ENCODE measurements at regions of chr3 and their contacts with region 1.

Region 1: DNA sequence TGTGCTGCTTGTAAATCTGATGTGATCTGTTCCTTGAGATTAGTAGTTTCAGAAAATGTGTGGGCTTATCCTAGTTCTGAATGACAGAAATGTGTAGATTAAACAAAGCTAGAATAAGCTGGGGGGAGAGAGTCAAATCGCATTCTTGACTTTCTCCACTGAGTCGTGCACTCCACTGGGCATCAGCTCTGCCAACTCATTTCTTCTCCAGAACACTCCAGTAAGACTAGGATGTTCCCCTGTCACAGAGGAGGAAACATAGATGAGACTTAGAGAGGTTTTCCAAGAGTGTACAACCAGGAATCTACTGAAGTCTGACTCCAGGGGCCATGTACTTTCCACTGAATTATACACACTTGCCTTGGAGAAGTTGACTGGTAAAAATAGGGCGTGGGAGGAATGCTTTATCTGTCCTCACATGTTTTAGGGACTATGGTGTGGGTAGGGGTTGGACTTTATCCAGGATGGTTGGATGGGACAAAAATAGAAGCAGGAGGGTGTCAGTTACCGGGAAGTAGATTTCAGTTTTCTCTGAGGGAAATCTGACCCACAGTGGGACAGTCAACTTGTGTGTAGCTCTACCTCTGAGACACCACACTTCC is 298.2 kb downstream of the UBE2E2 start:
- DNase-seq: no peak
- H3K4me3 ChIP-seq: no peak overlapping the region
- H3K27ac ChIP-seq: no peak overlapping the region
- H3K4me1 ChIP-seq: no peaks in the 10 kb centered on the region
- H3K27me3 ChIP-seq: no peaks in the 10 kb centered on the region
- CTCF ChIP-seq: no peak
- POLR2A ChIP-seq: no peak

Region 2: GRCh38 chr3:23519314-23520208 is 18.3 kb after region 1 on chr3:
- intact Hi-C with region 1: loop called (anchors 2 kb)
- DNase-seq: no peak
- H3K4me3 ChIP-seq: no peak overlapping the region
- H3K27ac ChIP-seq: no peak overlapping the region
- H3K4me1 ChIP-seq: no peaks in the 10 kb centered on the region
- H3K27me3 ChIP-seq: no peaks in the 10 kb centered on the region
- CTCF ChIP-seq: no peak
- POLR2A ChIP-seq: no peak

Region 3: GRCh38 chr3:24545913-24546312 is 1044.6 kb after region 1 on chr3:
- intact Hi-C with region 1: no loop called
- DNase-seq: no peak
- H3K4me3 ChIP-seq: no peak overlapping the region
- H3K27ac ChIP-seq: no peak overlapping the region
- H3K4me1 ChIP-seq: no peaks in the 10 kb centered on the region
- H3K27me3 ChIP-seq: no peaks in the 10 kb centered on the region
- CTCF ChIP-seq: no peak
- POLR2A ChIP-seq: no peak

Region 4: DNA sequence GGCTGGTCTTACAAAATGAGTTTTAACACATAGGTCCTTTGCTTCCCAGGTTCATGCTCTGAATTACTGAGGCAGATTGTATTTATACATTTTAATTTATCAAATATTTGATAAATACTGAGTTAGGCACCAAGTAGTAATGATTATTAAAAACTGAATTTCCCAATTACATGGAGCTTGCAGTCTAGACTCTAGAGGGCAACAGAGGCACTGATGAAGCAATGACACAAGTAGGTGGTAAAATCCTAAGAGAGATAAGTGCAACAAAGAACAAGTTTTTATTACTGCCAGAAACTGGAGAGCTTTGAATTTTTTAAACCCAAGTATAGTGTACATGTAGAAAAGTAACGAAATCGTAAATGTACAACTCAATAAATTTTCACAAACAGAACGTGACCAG is 1520.5 kb after region 1 on chr3:
- intact Hi-C with region 1: no loop called
- DNase-seq: no peak
- H3K4me3 ChIP-seq: no peak overlapping the region
- H3K27ac ChIP-seq: no peak overlapping the region
- H3K4me1 ChIP-seq: no peaks in the 10 kb centered on the region
- H3K27me3 ChIP-seq: no peaks in the 10 kb centered on the region
- CTCF ChIP-seq: peak; percentile 12 to 50 (median 42)
- POLR2A ChIP-seq: no peak